ENCODE measurements at regions of chr17 and their contacts with region 1.

Region 1: GRCh38 chr17:4789901-4790704 is 1.3 kb downstream of the GLTPD2 start:
- DNase-seq: peak; percentile 82
- ATAC-seq: peak; percentile 91
- H3K4me3 Mint-ChIP-seq: peak overlapping the region; percentile 89
- H3K27ac Mint-ChIP-seq: peak overlapping the region; percentile 80
- H3K4me1 Mint-ChIP-seq: peaks cover 19% of the 10 kb centered on the region
- H3K27me3 Mint-ChIP-seq: peaks cover 18% of the 10 kb centered on the region
- CTCF ChIP-seq: no peak

Region 2: DNA sequence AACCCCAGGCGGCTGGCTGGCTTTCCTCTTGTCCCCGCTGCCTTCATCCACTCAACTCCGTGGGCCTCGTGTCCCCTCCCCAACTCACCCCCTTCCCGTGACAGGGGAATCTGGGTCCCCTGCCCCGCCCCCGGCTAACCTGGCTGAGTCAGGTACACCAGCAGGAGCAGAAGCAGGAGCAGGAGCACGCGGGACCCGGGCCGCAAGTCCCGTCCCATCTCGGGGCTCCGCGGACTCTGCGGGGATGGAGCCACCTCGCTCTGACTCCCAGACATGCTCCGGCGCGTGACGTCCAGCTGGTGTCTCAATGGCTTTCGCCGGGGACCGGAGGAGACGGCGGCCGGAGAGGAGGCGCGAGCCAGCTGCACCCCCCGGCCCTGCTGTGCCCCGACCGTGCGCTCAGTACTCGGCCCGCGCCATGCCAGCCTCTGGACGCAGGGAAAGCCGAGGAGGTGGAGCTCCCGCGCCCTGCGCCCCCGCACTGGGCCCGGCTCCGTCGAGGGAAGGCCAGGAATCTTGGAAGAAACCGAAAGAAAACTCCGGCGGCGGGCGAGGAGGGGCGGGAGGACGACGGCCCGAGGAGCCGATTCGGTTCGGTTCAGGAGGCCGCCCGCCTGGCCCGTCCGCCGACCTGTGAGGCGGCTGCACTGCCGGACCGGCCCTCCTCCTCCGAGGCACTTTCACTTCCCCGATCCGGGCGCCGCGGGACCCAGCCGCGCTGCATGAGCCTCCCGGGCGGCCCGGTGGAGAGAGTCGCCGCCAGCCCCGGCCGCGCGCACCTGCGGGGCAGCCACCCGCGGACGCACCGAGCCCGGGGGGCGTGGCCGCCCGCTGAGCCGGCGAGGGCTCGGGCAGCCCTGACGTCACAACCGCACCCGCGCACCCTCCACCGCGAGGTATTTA is 50.7 kb before region 1 on chr17 and contains the starts of genes CXCL16 and ZMYND15:
- CTCF ChIA-PET with region 1: interaction called, 10 read pairs
- POLR2A ChIA-PET with region 1: interaction called, 3 read pairs
- intact Hi-C with region 1: no loop called
- DNase-seq: peak; percentile 76
- ATAC-seq: peak; percentile 87
- H3K4me3 Mint-ChIP-seq: peak within 1 kb of the TSS; percentile 83
- H3K27ac Mint-ChIP-seq: peak within 1 kb of the TSS; percentile 76
- H3K4me1 Mint-ChIP-seq: peaks cover 34% of the 10 kb centered on the region
- H3K27me3 Mint-ChIP-seq: no peaks in the 10 kb centered on the region
- CTCF ChIP-seq: no peak
- total RNA-seq, gene CXCL16: 3.0 and 3.5 TPM in 2 replicates
- total RNA-seq, gene ZMYND15: 0.15 and 0.31 TPM in 2 replicates

Region 3: DNA sequence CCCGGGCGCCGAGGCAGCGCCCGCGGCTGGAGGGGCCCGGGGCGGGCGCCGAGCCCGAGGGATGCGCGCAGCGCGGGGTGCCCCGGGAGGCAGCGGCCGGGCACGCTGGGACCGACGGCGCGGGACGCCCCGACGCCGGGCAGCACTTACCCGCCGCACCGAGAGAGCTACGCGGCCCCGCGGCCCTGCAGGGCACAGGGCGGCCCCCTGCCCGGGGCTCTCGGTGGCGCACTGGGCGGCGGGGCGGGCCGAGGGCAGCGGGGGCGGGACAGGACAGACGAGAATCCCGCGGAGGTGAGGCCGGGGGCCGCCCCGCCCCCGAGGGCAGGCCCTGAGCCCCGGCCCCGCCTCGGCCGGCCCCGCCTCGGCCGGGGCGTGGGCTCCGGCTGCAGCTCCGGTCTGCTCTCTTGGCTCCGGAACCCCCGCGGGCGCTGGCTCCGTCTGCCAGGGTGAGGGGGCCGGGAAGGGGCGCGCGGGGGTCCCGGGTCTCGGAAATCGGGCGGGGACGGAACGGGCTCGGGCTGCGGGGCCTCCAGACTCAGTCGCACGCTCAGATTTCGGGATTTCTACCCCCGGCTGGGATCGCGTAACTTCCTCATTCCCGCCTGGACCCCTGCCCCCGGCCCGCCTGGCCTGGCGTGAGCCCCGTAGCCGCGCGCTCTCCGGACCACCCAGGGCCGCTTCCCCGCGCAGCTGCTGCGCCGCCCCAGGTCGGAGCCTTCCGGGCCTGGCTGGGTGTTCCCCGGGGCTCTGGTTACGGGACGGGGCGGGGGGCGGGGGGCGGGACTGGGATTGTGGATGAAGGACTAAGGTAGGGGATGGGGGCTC is 16.9 kb after region 1 on chr17 and contains the start of gene PLD2:
- CTCF ChIA-PET with region 1: interaction called, 11 read pairs
- POLR2A ChIA-PET with region 1: interaction called, 20 read pairs
- intact Hi-C with region 1: loop called (anchors 1 kb)
- DNase-seq: peak; percentile 90
- ATAC-seq: peak; percentile 99
- H3K4me3 Mint-ChIP-seq: peak within 1 kb of the TSS; percentile 83
- H3K27ac Mint-ChIP-seq: peak within 1 kb of the TSS; percentile 56
- H3K4me1 Mint-ChIP-seq: peaks cover 17% of the 10 kb centered on the region
- H3K27me3 Mint-ChIP-seq: no peaks in the 10 kb centered on the region
- CTCF ChIP-seq: no peak
- total RNA-seq, gene PLD2: 49.9 and 54.3 TPM in 2 replicates

Region 4: DNA sequence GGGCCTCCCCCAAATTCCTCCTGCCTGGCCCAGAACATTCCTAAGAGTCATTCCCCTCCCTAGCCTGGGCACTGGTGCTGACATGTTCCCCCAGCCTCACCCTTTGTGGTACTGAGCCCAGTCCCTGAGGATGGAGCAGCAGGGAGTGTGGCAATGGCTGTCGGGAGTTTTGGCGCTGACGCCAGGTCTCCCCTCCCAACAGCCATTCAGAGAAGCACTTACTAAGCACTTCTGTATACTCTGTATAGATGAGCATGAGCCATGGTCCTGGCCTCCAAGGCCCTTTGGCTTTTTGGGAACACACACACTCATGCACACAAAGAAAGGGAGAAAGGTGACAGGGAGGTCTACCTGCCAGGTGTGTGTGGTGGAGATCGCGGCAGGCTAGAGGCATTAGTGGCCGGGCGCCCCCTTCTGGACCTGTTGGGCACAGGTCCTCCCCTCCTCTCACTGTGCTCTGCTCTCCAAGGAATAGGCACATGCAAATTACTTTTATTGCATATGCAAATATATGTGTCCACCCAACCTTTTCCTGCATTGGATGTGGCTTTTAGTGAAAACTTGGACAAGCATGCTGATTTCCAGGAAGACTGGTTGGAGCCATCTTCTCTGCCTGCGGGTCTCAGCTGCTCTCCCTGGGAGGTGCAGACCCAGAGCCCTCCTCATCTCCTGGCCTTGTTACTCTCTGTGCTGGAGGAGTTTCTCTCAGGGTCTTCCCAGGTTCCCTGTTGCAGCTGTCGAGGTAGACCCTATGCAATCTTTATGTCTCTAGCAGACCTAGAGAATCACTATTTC is 91.9 kb after region 1 on chr17:
- CTCF ChIA-PET with region 1: no interaction called
- POLR2A ChIA-PET with region 1: interaction called, 3 read pairs
- intact Hi-C with region 1: loop called (anchors 1 kb)
- DNase-seq: peak; percentile 50
- ATAC-seq: peak; percentile 93
- H3K4me3 Mint-ChIP-seq: no peak overlapping the region
- H3K27ac Mint-ChIP-seq: no peak overlapping the region
- H3K4me1 Mint-ChIP-seq: peaks cover 6% of the 10 kb centered on the region
- H3K27me3 Mint-ChIP-seq: no peaks in the 10 kb centered on the region
- CTCF ChIP-seq: peak; percentile 45

Region 5: GRCh38 chr17:4891411-4892342 is 101.6 kb after region 1 on chr17:
- CTCF ChIA-PET with region 1: interaction called, 3 read pairs
- POLR2A ChIA-PET with region 1: interaction called, 6 read pairs
- intact Hi-C with region 1: loop called (anchors 1 kb)
- DNase-seq: no peak
- ATAC-seq: no peak
- H3K4me3 Mint-ChIP-seq: no peak overlapping the region
- H3K27ac Mint-ChIP-seq: no peak overlapping the region
- H3K4me1 Mint-ChIP-seq: peaks cover 4% of the 10 kb centered on the region
- H3K27me3 Mint-ChIP-seq: no peaks in the 10 kb centered on the region
- CTCF ChIP-seq: no peak